ENCODE measurements at regions of chr1 and their contacts with region 1.

Region 1: GRCh38 chr1:93015590-93015989 is 54.3 kb upstream of the DIPK1A start:
- DNase-seq: peak; percentile 93
- ATAC-seq: peak; percentile 91
- H3K4me3 ChIP-seq: peak overlapping the region; percentile 41
- H3K27ac ChIP-seq: peak overlapping the region; percentile 92
- H3K4me1 ChIP-seq: peaks cover 47% of the 10 kb centered on the region
- H3K27me3 ChIP-seq: no peaks in the 10 kb centered on the region
- CTCF ChIP-seq: no peak

Region 2: DNA sequence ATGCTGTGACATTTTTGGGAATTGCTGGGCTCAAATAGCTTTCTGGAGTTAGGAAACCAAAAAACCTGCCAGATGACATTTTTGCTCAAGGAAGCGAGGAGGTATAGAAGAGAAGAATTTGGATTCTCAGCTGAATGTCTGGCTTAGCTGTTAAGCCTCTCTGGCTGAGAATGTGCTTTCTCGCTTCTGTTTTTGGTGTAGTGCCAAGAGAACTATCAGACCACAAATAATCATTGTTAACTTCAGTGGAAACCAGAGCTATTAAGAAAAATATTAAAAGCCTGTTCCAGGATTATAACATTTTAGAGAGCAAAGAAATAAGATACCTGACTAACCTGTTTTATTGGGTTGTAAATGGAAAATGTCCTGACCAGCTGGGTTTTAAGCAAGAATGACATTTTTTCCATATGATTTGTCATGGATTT is 14.8 kb before region 1 on chr1:
- CTCF ChIA-PET with region 1: interaction called, 16 read pairs
- POLR2A ChIA-PET with region 1: interaction called, 4 read pairs
- intact Hi-C with region 1: loop called (anchors 2 kb)
- DNase-seq: peak; percentile 88
- ATAC-seq: peak; percentile 84
- H3K4me3 ChIP-seq: peak overlapping the region; percentile 36; the same call in 1 of the 2 replicates
- H3K27ac ChIP-seq: peak overlapping the region; percentile 66
- H3K4me1 ChIP-seq: peaks cover 34% of the 10 kb centered on the region
- H3K27me3 ChIP-seq: no peaks in the 10 kb centered on the region
- CTCF ChIP-seq: no peak

Region 3: GRCh38 chr1:93304716-93305138 is 289.1 kb after region 1 on chr1:
- CTCF ChIA-PET with region 1: no interaction called
- POLR2A ChIA-PET with region 1: no interaction called
- intact Hi-C with region 1: no loop called
- DNase-seq: peak; percentile 86
- ATAC-seq: peak; percentile 75
- H3K4me3 ChIP-seq: no peak overlapping the region
- H3K27ac ChIP-seq: no peak overlapping the region
- H3K4me1 ChIP-seq: no peaks in the 10 kb centered on the region; the same call in 1 of the 2 replicates
- H3K27me3 ChIP-seq: no peaks in the 10 kb centered on the region
- CTCF ChIP-seq: peak; percentile 95

Measured in PC-3 (cell line).